Naive thymus-derived CD4-positive, alpha-beta T cell (primary cell): ENCODE measurements at regions of chr18 and their contacts with region 1.

Region 1: GRCh38 chr18:21004726-21005125 is 106.9 kb downstream of the ROCK1 start:
- DNase-seq: no peak
- ATAC-seq: no peak
- H3K4me3 ChIP-seq: no peak overlapping the region
- H3K4me3 Mint-ChIP-seq: no peak overlapping the region
- H3K27ac ChIP-seq: no peak overlapping the region
- H3K27ac Mint-ChIP-seq: peak overlapping the region in 4 of 9 donors; percentile 4 to 13 (median 6)
- H3K4me1 ChIP-seq: no peaks in the 10 kb centered on the region
- H3K4me1 Mint-ChIP-seq: peaks cover 0 to 10% (median 6%) of the 10 kb centered on the region in 7 donors
- H3K27me3 ChIP-seq: no peaks in the 10 kb centered on the region
- H3K27me3 Mint-ChIP-seq: no peaks in the 10 kb centered on the region

Region 2: DNA sequence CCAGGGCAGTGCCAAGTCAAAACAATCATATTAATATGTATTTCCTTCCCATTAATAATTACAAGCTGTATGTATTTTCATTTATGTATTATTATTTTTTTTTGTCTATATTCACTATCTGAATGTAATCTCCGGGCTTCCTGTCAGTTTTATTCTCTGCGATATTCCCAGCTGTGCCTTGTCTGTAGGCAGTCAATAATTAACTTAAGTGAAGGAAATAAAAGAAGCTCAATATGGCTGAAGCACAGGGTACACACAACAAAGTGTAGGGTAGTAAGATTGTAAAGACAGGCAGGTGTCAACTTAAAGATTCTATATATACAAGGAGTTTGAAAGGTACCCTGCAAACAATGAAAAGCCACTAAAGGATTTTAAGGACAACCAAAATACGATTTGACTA is 16.0 kb before region 1 on chr18:
- CTCF ChIA-PET with region 1: interaction called, 3 read pairs
- POLR2A ChIA-PET with region 1: no interaction called
- intact Hi-C with region 1: loop called in 1 of 2 experiments (anchors 2 kb)
- DNase-seq: no peak
- ATAC-seq: no peak
- H3K4me3 ChIP-seq: no peak overlapping the region
- H3K4me3 Mint-ChIP-seq: no peak overlapping the region
- H3K27ac ChIP-seq: no peak overlapping the region
- H3K27ac Mint-ChIP-seq: peak overlapping the region in 5 of 9 donors; percentile 5 to 32 (median 23)
- H3K4me1 ChIP-seq: no peaks in the 10 kb centered on the region
- H3K4me1 Mint-ChIP-seq: peaks cover 0 to 4% (median 0%) of the 10 kb centered on the region in 7 donors
- H3K27me3 ChIP-seq: no peaks in the 10 kb centered on the region
- H3K27me3 Mint-ChIP-seq: no peaks in the 10 kb centered on the region

Region 3: DNA sequence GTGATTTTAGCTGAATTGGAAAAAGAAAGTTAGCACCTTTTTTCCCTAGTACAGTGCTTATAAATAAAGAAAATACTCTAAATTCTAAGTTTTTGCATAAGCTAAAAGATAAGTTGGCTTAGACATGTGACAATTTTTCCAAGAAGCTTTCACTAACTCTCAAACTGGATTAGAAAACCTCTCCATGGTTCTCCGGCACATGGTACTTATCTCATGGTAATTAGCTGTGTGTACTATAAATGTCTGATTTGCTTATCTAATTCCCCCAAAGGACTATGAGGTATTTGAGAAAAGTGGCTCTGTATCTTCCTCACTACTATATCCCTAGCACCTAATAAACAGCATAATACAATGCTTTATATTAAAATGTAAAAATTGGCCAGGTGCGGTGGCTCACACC is 35.7 kb after region 1 on chr18:
- CTCF ChIA-PET with region 1: no interaction called
- POLR2A ChIA-PET with region 1: no interaction called
- intact Hi-C with region 1: loop called in 1 of 2 experiments (anchors 5 kb)
- DNase-seq: no peak
- ATAC-seq: no peak
- H3K4me3 ChIP-seq: no peak overlapping the region
- H3K4me3 Mint-ChIP-seq: no peak overlapping the region
- H3K27ac ChIP-seq: no peak overlapping the region
- H3K27ac Mint-ChIP-seq: peak overlapping the region in 4 of 9 donors; percentile 10 to 65 (median 42)
- H3K4me1 ChIP-seq: no peaks in the 10 kb centered on the region
- H3K4me1 Mint-ChIP-seq: peaks cover 0 to 22% (median 9%) of the 10 kb centered on the region in 7 donors
- H3K27me3 ChIP-seq: no peaks in the 10 kb centered on the region
- H3K27me3 Mint-ChIP-seq: no peaks in the 10 kb centered on the region

Region 4: DNA sequence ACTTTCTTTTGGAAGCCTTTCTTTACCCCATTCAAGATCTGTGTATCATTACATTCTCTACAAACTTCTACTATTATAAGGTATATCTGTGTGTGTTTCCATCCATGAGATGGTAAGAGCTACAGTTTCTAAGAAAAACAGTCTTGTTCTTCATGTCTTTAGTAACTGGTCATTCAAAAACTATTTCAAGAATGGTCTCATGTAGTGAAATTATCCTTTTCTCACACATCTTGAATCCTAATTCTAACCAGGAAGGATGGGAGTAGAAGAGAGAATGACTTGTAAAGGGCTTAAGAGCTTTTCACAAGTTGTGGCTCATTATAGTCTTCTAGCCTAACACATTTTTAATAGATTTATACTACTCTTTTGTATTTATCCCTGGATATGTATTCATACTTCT is 59.6 kb after region 1 on chr18:
- CTCF ChIA-PET with region 1: no interaction called
- POLR2A ChIA-PET with region 1: no interaction called
- intact Hi-C with region 1: no loop called
- DNase-seq: no peak
- ATAC-seq: no peak
- H3K4me3 ChIP-seq: no peak overlapping the region
- H3K4me3 Mint-ChIP-seq: no peak overlapping the region
- H3K27ac ChIP-seq: no peak overlapping the region
- H3K27ac Mint-ChIP-seq: peak overlapping the region in 3 of 9 donors; percentile 6 to 68 (median 40)
- H3K4me1 ChIP-seq: no peaks in the 10 kb centered on the region
- H3K4me1 Mint-ChIP-seq: peaks cover 10 to 60% (median 47%) of the 10 kb centered on the region in 7 donors
- H3K27me3 ChIP-seq: no peaks in the 10 kb centered on the region
- H3K27me3 Mint-ChIP-seq: no peaks in the 10 kb centered on the region

Region 5: DNA sequence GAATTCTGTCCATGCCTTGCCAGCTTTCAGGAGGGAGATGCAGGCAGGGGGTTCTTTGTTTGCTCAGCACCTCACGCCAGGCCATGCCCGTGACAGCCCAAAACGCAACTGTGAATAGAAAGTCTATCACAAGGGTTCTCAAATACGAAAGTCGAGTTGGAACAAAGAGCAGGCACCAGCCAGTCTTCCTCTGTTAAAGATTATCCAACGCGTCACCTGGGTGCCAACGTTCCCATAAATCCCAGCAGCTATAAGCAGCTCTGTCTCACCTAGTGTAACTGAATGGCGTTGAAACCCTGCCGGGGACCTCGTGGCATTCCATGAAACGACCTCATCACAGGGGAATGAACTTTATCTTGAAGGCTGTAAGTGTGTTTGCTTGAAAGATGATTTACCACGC is 1079.8 kb after region 1 on chr18:
- CTCF ChIA-PET with region 1: no interaction called
- POLR2A ChIA-PET with region 1: no interaction called
- intact Hi-C with region 1: no loop called
- DNase-seq: no peak
- ATAC-seq: no peak
- H3K4me3 ChIP-seq: no peak overlapping the region
- H3K4me3 Mint-ChIP-seq: no peak overlapping the region
- H3K27ac ChIP-seq: no peak overlapping the region
- H3K27ac Mint-ChIP-seq: no peak overlapping the region
- H3K4me1 ChIP-seq: no peaks in the 10 kb centered on the region
- H3K4me1 Mint-ChIP-seq: no peaks in the 10 kb centered on the region
- H3K27me3 ChIP-seq: peaks cover 0 to 3% of the 10 kb centered on the region in 2 donors
- H3K27me3 Mint-ChIP-seq: no peaks in the 10 kb centered on the region